ENCODE measurements at regions of chr15 and their contacts with region 1.

Region 1: GRCh38 chr15:42457445-42458442 is 33.2 kb downstream of the ZNF106 start:
- DNase-seq: peak; percentile 50 to 89
- ATAC-seq: peak; percentile 90 to 95 (median 94)
- H3K4me3 ChIP-seq: peak overlapping the region in 9 of 10 donors; percentile 23 to 56 (median 49)
- H3K27ac ChIP-seq: peak overlapping the region; percentile 59 to 93 (median 85)
- H3K4me1 ChIP-seq: peaks cover 0 to 62% (median 33%) of the 10 kb centered on the region in 9 donors
- H3K27me3 ChIP-seq: no peaks in the 10 kb centered on the region
- CTCF ChIP-seq: no peak

Region 2: DNA sequence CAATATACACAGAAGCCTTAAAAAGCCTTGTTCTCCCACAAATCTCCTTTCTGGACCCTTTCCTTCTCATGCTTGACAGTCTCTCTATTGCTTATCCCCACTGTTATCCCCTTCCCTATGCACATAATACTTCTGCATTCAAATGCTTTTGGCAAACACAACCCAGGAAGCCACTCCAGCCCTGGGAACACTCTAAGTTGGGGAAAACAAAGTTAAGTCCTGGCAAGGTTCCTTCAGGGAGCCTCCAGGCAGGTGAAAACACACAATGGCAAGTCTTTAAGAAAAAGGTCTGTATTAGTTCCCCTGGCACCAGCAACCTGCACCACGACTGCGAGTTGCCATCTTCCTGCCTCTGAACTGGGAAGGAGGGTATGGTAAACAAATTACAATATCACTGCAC is 204.4 kb before region 1 on chr15:
- intact Hi-C with region 1: no loop called
- DNase-seq: no peak
- ATAC-seq: no peak
- H3K4me3 ChIP-seq: no peak overlapping the region
- H3K27ac ChIP-seq: no peak overlapping the region
- H3K4me1 ChIP-seq: no peaks in the 10 kb centered on the region
- H3K27me3 ChIP-seq: no peaks in the 10 kb centered on the region
- CTCF ChIP-seq: no peak

Region 3: GRCh38 chr15:42273102-42273899 is 184.4 kb before region 1 on chr15 and contains the starts of genes GANC and TMEM87A:
- intact Hi-C with region 1: loop called in 4 of 10 experiments (anchors 5 to 10 kb)
- DNase-seq: peak; percentile 95 to 98
- ATAC-seq: peak; percentile 98 to 99 (median 98)
- H3K4me3 ChIP-seq: peak within 1 kb of the TSS; percentile 59 to 89 (median 74)
- H3K27ac ChIP-seq: peak within 1 kb of the TSS; percentile 94 to 99 (median 96)
- H3K4me1 ChIP-seq: peaks cover 0 to 63% (median 47%) of the 10 kb centered on the region in 9 donors
- H3K27me3 ChIP-seq: no peaks in the 10 kb centered on the region
- CTCF ChIP-seq: peak in 1 of 9 donors; percentile 24
- total RNA-seq, gene GANC: 15.4 to 25.8 (median 18.9) TPM
- total RNA-seq, gene TMEM87A: 17.5 to 25.9 (median 21.3) TPM

Region 4: DNA sequence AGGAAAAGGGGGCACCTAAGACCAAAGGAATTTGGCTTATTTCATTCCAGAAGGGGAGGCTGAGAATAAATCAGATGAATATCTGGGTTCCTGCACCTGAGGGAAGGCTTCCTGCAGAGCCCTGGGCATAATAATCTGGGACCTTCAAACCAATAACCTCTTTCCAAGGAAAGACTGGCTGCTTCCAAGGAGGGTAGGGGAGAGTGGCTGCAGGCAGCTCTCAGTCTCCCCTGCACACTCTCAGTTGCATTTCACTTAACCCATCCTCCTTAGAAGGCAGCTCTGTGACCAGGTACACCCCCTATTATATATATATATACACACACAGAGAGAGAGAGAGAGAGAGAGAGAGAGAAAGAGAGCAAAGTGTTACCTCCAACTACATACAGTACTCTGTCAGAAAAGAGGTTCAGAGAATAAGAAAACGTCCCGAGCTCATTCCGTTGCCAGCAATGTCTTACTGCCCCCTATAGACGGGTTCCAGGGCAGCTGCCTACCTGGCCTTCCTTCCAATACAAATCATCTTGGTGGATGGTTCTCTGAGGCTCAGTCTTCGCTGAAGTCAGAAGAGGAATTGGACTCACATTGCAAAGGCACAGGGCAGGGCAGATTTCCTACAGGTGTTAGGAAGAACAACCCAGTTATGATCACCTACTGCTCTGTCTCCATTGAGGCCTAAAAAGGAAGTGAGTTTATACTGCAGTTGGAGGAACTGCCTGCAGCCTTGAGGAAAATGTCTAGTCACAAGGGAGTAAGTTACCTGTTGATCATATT is 72.4 kb before region 1 on chr15:
- intact Hi-C with region 1: loop called in 1 of 10 experiments (anchors 10 kb)
- DNase-seq: no peak
- ATAC-seq: peak in 6 of 8 donors; percentile 41 to 68 (median 59)
- H3K4me3 ChIP-seq: no peak overlapping the region
- H3K27ac ChIP-seq: peak overlapping the region in 7 of 10 donors; percentile 20 to 79 (median 57)
- H3K4me1 ChIP-seq: peaks cover 0 to 41% (median 15%) of the 10 kb centered on the region in 9 donors
- H3K27me3 ChIP-seq: no peaks in the 10 kb centered on the region
- CTCF ChIP-seq: peak; percentile 28 to 68 (median 56)

Region 5: DNA sequence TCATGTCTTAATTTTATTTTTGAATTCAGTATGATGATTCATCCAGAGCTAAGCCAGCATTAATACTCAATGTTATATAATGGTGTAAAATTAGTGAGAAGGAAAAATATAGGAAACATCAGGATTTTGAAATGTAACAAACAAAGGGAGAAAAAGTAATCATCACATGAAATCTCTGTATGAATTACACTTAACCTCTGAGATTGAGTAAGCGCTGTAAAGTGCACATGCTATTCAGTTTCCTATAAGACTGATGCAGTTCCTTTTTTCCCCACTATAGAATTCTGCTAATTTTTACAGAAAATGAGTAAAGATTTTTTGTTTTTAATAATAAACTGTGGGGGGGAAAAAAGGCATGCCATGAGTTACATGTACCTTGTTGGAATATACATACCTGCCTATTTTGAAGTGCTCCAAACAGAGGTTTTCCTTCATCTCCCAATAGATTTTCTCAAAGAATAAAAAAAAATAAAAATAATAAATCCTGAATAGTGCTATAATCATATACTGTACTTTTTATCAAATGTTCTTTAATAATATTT is 526.8 kb after region 1 on chr15:
- intact Hi-C with region 1: no loop called
- DNase-seq: no peak
- ATAC-seq: no peak
- H3K4me3 ChIP-seq: no peak overlapping the region
- H3K27ac ChIP-seq: no peak overlapping the region
- H3K4me1 ChIP-seq: no peaks in the 10 kb centered on the region
- H3K27me3 ChIP-seq: no peaks in the 10 kb centered on the region
- CTCF ChIP-seq: peak in 1 of 9 donors; percentile 26

Measured in heart right ventricle (tissue), 16 donors.